Motor neuron (in vitro differentiated cells): ENCODE measurements at regions of chr4 and their contacts with region 1.

Region 1: DNA sequence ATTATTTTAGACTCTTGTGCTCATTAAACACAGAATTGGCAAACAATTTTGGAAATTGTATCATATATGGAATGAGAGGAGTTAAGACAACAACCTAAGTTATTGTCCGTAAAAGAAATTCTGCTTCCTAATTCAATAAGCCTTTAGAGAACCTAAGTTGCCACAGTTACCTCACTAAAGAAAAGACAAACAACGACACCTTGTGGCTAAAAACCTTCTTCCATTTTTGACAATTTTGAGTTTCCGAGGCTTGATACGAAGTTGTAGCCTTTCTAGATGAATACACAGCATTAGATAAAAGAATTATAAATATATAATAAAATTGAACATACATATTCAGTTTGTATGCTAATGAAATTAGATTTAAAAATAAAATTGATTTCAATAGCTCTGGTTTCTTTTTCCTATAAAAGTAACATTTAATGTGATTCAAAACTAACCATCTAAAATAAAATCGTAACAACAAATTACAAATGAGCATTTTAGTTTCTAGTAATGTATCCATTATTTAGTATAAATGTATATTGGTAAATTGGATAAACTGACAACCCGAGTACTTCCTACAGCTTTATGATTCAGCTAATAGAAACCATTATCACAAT is 275.1 kb downstream of the GPM6A start:
- ATAC-seq: peak in 4 of 8 experiments; percentile 16 to 54 (median 35)
- H3K4me3 ChIP-seq: no peak overlapping the region
- H3K27ac ChIP-seq: no peak overlapping the region
- H3K4me1 ChIP-seq: no peaks in the 10 kb centered on the region

Region 2: DNA sequence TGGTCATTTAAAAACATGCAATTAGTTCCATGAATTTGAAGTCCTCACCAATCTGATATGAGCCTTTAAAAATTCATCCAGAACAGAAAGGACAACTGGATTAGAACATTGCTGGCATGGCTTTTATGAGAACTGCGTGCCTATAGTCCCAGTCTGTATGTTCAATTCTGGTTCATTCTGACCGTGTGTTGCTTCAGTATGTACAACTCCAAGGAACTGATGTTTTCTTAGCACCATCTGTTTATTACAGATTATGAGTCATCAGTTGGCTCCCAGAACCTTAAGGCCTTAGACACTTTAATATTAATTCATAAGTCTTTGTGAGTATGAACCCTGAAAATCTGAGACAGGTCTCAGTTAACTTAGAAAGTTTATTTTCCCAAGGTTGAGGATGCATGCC is 1138.2 kb before region 1 on chr4:
- in situ Hi-C with region 1: loop called in 1 of 9 experiments (anchors 25 kb)
- ATAC-seq: peak in 3 of 8 experiments; percentile 25 to 78 (median 69)
- H3K4me3 ChIP-seq: no peak overlapping the region
- H3K27ac ChIP-seq: no peak overlapping the region
- H3K4me1 ChIP-seq: no peaks in the 10 kb centered on the region

Region 3: GRCh38 chr4:174882317-174882992 is 654.5 kb before region 1 on chr4:
- in situ Hi-C with region 1: loop called in 1 of 9 experiments (anchors 25 kb)
- ATAC-seq: no peak
- H3K4me3 ChIP-seq: no peak overlapping the region
- H3K27ac ChIP-seq: no peak overlapping the region
- H3K4me1 ChIP-seq: no peaks in the 10 kb centered on the region